Heart left ventricle (tissue), 16 donors: ENCODE measurements at regions of chr19 and their contacts with region 1.

Region 1: GRCh38 chr19:21396893-21397572 is at the start of gene ZNF493:
- DNase-seq: peak; percentile 93 to 97 (median 95)
- ATAC-seq: peak; percentile 100
- H3K4me3 ChIP-seq: peak within 1 kb of the TSS; percentile 35 to 95 (median 82)
- H3K27ac ChIP-seq: peak within 1 kb of the TSS in 11 of 12 donors; percentile 73 to 87 (median 84)
- H3K4me1 ChIP-seq: peaks cover 0 to 39% (median 16%) of the 10 kb centered on the region in 12 donors
- H3K27me3 ChIP-seq: no peaks in the 10 kb centered on the region
- CTCF ChIP-seq: no peak
- POLR2A ChIP-seq: peak in 1 of 2 donors; percentile 78
- total RNA-seq, gene ZNF493: 7.2 to 18.2 (median 10.9) TPM

Region 2: DNA sequence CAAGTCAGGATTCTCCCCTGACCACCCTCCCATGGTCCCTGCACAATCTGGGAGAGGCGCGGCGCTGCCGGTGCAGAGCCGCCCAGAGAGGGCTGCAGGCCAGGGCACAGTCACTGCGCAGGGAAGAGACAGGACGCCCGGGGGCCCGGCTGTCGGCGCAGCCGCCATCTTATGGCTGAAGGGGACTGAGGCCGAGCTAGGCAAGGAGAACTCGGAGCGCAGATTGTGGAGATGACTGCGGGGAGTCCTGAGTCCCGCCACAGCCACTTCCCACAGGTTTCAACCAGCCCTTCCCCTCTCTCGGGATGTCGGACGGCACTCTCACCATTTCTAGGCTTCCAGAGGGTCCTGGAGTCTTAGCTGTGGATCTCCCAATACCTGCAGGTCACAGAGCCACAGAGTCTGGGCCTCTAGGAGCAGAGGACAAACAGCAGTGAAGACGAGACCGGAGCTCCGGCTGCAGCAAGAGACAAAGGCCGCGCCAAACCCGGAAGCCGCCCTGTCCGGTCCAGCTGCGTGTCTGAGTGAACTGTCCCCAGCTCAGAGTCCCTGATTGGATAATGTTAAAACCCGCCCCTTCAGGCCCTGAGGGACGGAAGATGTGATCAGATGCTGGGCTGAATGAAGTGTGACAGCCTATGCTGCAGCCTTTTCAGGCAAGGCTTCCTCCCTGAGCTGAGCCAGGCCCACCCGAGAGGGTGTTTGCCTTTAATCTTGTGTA is 68.0 kb before region 1 on chr19 and contains the start of gene ZNF708:
- intact Hi-C with region 1: loop called in 1 of 10 experiments (anchors 1 kb)
- DNase-seq: peak; percentile 90 to 94 (median 93)
- ATAC-seq: peak; percentile 99 to 100 (median 100)
- H3K4me3 ChIP-seq: peak within 1 kb of the TSS; percentile 50 to 90 (median 75)
- H3K27ac ChIP-seq: peak within 1 kb of the TSS; percentile 81 to 98 (median 93)
- H3K4me1 ChIP-seq: peaks cover 0 to 23% (median 12%) of the 10 kb centered on the region in 12 donors
- H3K27me3 ChIP-seq: no peaks in the 10 kb centered on the region
- CTCF ChIP-seq: no peak
- POLR2A ChIP-seq: peak in 1 of 2 donors; percentile 78
- total RNA-seq, gene ZNF708: 3.1 to 8.7 (median 4.5) TPM

Region 3: DNA sequence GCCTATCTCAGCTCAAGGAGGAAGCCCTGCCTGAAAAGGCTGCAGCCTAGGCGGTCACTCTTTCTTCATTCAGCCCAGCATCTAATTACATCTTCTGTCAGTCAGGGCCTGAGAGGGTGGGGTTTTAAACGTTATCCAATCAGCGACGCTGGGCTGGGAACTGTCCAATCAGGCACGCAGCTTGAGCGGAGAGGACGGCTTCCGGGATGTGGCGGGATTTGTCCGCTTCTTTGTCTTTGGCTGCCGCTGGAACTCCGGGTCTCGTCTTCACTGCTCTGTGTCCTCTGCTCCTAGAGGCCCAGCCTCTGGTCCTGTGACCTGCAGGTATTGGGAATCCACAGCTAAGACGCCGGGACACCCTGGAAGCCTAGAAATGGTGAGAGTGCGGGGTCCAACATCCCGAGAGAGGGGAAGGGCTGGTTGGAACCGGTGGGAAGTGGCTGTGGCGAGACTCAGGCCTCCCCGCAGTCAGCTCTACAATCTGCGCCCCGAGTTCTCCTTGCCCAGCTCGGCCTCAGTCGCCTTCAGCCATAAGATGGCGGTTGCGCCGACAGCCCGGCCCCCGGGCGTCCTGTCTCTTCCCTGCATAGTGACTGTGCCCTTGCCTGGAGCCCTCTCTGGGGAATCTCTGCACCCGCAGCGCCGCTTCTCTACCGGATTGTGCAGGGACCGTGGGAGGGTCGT is 38.1 kb before region 1 on chr19 and contains the start of gene ZNF738:
- intact Hi-C with region 1: loop called in 2 of 10 experiments (anchors 2 to 5 kb)
- DNase-seq: peak; percentile 93 to 94 (median 93)
- ATAC-seq: peak; percentile 99 to 100 (median 100)
- H3K4me3 ChIP-seq: peak within 1 kb of the TSS; percentile 44 to 92 (median 74)
- H3K27ac ChIP-seq: peak within 1 kb of the TSS in 11 of 12 donors; percentile 65 to 84 (median 73)
- H3K4me1 ChIP-seq: peaks cover 0 to 9% (median 4%) of the 10 kb centered on the region in 12 donors
- H3K27me3 ChIP-seq: no peaks in the 10 kb centered on the region
- CTCF ChIP-seq: no peak
- POLR2A ChIP-seq: peak in 1 of 2 donors; percentile 45
- total RNA-seq, gene ZNF738: 2.0 to 6.0 (median 2.5) TPM

Region 4: DNA sequence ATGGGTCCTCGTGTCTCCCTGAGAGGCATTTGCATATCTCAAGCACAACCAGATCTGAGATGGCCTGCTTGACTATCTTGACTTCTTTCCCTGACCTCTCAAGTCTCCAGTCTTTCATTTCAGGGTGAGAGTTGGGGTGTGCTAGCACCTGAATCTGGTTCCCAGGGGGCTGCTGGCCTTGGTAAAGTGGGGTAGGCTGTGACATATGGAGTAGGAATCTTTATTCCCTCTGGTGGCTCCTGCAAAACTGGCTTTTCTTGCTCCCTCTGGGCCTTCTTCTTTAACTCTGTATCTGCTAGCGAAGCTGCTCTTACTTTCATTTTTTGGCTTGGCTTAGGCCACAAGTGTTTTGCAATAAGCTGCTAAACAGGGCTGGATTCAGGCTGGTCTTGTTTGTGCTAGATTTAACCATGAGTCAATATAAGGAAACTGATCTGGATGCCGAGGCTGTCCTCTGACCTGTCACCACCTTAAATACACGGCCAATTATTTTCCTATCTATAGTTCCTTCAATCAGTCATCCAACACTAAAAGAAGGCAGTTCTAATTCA is 42.2 kb after region 1 on chr19:
- intact Hi-C with region 1: no loop called
- DNase-seq: no peak
- ATAC-seq: peak in 3 of 4 donors; percentile 68 to 82 (median 69)
- H3K4me3 ChIP-seq: peak overlapping the region in 4 of 12 donors; percentile 9 to 36 (median 24)
- H3K27ac ChIP-seq: peak overlapping the region in 3 of 12 donors; percentile 8 to 63 (median 27)
- H3K4me1 ChIP-seq: peaks cover 0 to 3% (median 0%) of the 10 kb centered on the region in 12 donors
- H3K27me3 ChIP-seq: no peaks in the 10 kb centered on the region
- CTCF ChIP-seq: no peak
- POLR2A ChIP-seq: no peak

Region 5: DNA sequence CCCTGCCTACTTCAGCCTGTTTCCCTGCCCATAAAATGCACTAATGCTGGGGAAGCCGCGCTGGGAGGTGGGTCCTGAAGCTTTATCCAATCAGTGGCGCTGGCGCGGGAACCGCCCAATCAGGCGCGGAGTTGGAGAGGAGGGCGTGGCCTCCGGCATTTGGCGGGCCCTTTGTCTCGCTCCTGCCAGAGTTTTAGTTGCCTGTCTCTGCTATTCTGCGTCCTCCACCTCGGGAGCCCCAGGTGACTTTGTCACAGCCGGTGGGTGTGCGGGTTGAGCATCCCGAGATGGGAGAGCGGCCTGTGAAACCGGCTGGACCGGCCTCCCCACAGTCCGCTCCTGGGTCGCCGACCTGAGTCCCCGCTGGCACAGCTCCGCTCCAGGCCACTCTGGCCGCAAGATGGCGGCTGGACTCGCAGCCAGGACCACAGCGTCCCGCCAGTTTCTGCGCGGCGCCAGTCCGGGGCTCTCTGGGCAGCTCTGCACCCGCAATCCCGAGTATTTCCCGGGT is 77.7 kb after region 1 on chr19:
- intact Hi-C with region 1: loop called in 1 of 10 experiments (anchors 2 kb)
- DNase-seq: peak; percentile 80 to 91 (median 83)
- ATAC-seq: peak; percentile 98 to 100 (median 100)
- H3K4me3 ChIP-seq: peak overlapping the region; percentile 11 to 68 (median 58)
- H3K27ac ChIP-seq: no peak overlapping the region
- H3K4me1 ChIP-seq: peaks cover 0 to 15% (median 4%) of the 10 kb centered on the region in 12 donors
- H3K27me3 ChIP-seq: peaks cover 0 to 3% (median 0%) of the 10 kb centered on the region in 9 donors
- CTCF ChIP-seq: peak in 7 of 12 donors; percentile 6 to 33 (median 10)
- POLR2A ChIP-seq: no peak

Region 6: GRCh38 chr19:21856773-21857514 is 459.9 kb after region 1 on chr19:
- intact Hi-C with region 1: no loop called
- DNase-seq: no peak
- ATAC-seq: no peak
- H3K4me3 ChIP-seq: no peak overlapping the region
- H3K27ac ChIP-seq: no peak overlapping the region
- H3K4me1 ChIP-seq: peaks cover 0 to 6% (median 4%) of the 10 kb centered on the region in 12 donors
- H3K27me3 ChIP-seq: peaks cover 0 to 15% (median 0%) of the 10 kb centered on the region in 9 donors
- CTCF ChIP-seq: no peak
- POLR2A ChIP-seq: no peak